Right ventricle myocardium inferior (tissue), 1 donor: ENCODE measurements at regions of chr9 and their contacts with region 1.

Region 1: DNA sequence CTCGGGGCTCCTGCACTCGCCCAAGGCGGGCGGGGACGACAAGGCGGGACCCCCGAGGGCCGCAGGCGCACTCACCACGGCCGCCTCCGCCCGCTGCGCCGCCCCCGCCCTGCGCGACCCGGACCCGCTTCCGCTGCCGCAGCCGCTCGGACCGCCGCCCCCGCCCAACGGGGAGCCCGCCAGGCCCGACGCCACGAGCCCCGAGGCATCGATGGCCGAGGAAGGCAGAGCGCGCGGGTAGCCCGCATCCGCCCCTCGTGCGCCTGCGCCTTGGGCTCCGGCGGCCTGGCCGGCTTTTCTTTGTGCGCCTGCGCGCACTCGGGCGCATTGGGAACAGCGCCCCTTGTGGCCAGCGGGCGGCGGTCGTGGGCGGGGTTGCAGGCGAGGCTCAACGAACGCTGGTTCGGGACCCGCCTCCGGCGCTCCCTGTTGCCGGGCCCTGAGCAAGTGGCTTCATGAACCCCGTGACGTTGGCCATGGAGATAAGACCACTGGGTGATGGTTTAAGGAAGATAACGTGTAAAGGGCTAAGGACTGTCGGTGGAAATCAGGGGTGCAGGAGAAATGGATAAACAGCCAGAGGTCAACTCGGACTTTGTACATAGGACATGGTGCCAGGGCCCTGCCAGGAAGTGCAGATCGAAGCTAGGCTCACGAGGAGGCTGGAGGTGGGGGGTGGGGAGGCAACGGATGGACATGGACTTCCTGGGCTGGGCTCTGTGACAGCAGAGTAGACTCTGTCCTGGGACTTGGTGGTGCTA is at the starts of genes C8G and FBXW5:
- DNase-seq: peak; percentile 98
- ATAC-seq: peak; percentile 81
- total RNA-seq, gene C8G: 1.3 TPM
- total RNA-seq, gene FBXW5: 143 TPM

Region 2: DNA sequence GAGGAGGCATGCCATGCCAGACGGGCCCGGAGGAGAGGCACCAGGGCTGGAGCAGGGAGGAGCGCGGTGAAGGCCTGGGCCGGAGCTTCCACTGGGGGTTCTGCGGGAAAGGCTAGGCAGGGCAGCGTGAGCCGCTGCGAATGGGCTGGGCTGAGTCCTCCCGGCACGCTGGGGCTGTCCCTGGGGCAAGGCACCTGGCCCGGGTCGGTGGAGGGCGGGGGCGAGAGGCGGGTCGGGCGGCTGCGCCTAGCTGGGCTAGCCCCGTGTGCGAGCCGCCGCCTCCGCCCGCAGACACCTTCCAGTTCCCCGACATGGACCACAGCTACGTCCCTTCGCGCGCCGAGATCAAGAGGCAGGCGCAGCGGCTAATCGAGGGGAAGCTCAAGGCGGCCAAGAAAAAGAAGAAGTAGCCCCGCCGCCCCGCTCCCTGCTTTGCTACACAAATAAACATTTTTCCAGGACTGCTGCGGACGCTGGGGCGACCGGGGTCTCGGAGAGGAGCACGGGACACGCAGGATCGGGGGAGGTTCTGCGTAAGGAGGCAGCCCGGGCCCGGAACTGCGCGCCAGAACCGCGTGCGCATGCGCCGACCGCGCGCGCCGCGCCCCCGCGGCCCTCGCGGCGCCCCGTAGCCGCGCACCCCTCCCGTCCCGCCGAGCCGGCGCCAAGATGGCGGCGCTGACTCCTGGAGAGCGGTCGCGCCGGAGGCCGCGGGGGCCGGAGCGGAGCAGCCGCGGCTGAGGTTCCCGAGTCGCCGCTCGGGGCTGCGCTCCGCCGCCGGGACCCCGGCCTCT is 137.2 kb before region 1 on chr9 and contains the start of gene RABL6:
- intact Hi-C with region 1: loop called (anchors 5 kb)
- DNase-seq: peak; percentile 90
- ATAC-seq: peak; percentile 92
- total RNA-seq, gene RABL6: 69.5 TPM

Region 3: GRCh38 chr9:136849038-136849959 is 95.4 kb before region 1 on chr9 and contains the start of gene PHPT1:
- intact Hi-C with region 1: loop called (anchors 1 kb)
- DNase-seq: peak; percentile 99
- ATAC-seq: peak; percentile 87
- total RNA-seq, gene PHPT1: 358 TPM

Region 4: GRCh38 chr9:136865735-136866103 is 79.0 kb before region 1 on chr9:
- intact Hi-C with region 1: loop called (anchors 5 kb)
- DNase-seq: no peak
- ATAC-seq: peak; percentile 1

Region 5: DNA sequence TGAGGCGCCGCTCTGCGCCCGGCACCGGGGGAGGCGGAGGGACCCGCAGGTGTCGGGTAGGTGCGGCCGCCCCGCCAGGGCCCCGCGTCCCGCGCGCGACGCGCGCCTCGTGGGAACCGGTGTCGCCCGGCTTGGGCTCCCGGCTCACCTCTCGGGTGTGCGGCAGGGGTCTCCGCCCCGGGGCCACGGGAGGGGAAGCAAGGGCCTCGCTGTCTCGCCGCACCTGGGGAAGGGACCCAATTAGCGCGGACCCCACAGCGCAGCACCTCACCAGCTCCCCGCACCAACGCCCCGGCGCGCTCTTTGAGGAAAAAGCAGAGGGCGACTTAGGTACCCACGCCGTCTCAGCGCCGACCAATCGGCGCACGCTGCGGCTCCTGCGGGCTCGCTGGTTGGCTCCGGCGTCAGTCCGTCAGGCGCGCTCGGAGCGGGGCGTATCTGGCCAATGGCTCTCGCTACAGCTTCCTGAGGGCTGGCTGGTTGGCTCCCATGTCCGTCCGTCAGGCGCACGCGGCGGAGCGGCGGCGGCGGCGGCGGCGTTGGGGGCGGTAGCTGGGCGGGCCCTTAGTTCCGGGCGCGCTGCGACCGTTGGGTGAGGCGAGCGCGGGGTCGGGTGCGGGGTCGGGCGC is 58.6 kb before region 1 on chr9 and contains the start of gene TRAF2:
- intact Hi-C with region 1: loop called (anchors 5 kb)
- DNase-seq: peak; percentile 98
- ATAC-seq: peak; percentile 99
- total RNA-seq, gene TRAF2: 12.6 TPM

Region 6: DNA sequence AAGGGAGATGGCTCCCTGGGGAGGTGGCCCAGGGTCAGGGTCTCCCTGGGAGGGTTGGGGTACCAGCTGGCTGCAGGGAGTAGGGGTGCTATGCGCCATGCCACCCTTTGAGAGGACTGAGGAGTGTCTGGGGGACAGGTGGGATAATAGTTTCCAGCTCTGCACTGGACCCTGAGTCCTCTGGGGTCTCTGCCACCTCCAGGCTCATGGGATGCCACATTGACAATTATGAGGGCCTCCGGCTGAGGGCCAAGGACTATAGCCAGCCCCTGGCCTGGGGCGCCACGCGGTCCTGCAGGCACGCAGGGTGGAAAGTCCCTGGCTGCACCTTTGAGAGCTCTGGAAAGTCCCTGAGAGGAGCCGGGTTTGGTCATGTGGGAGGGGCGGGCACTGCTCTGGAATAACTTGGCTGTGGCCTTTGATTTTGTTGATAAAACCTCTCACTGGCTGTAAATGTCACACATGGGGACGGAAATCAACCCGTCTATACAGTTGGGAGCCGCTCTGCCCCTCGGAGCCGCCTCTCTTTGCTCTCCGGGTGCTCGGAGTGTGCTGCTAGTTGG is 42.4 kb before region 1 on chr9:
- intact Hi-C with region 1: loop called (anchors 5 kb)
- DNase-seq: no peak
- ATAC-seq: peak; percentile 89